H1 (cell line): ENCODE measurements at regions of chr10 and their contacts with region 1.

Region 1: GRCh38 chr10:67884313-67884841 is at the start of gene SIRT1:
- DNase-seq: peak; percentile 88 to 96
- H3K4me3 ChIP-seq: peak within 1 kb of the TSS; percentile 90 to 100 (median 94)
- H3K27ac ChIP-seq: peak within 1 kb of the TSS; percentile 77
- H3K4me1 ChIP-seq: peaks cover 0 to 6% (median 5%) of the 10 kb centered on the region in 4 experiments; a peak in 5 of 7 replicates
- H3K27me3 ChIP-seq: no peaks in the 10 kb centered on the region
- CTCF ChIP-seq: no peak
- EP300 ChIP-seq: peak in 1 of 2 experiments; percentile 37; a peak in 1 of 3 replicates
- POLR2A ChIP-seq: peak; percentile 99
- RAD21 ChIP-seq: peak in 1 of 2 experiments; percentile 19; a peak in 3 of 4 replicates
- total RNA-seq, gene SIRT1: 66.2 and 70.9 TPM in 2 replicates

Region 2: DNA sequence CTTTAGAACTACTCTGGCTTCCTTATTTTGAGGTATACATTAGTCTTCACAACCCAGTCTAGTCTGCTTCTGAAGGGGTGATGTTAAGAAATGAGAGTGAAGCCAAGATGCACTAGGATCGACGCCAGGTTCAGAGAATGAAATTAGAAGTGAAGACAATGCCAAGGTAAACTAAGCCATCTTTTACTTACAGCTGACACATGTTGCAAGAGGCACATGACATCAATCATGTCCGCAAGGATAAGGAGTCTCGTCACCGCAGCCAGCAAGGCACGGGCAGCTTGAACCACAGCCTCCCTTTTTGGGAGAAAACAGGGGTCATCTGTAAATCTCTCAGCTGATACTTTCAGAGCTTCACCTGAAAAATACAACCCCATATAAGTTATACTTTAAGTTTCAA is 345.1 kb before region 1 on chr10:
- CTCF ChIA-PET with region 1: no interaction called
- POLR2A ChIA-PET with region 1: no interaction called
- DNase-seq: no peak
- H3K4me3 ChIP-seq: no peak overlapping the region
- H3K27ac ChIP-seq: no peak overlapping the region
- H3K4me1 ChIP-seq: no peaks in the 10 kb centered on the region
- H3K27me3 ChIP-seq: no peaks in the 10 kb centered on the region
- CTCF ChIP-seq: no peak
- EP300 ChIP-seq: no peak
- POLR2A ChIP-seq: no peak
- RAD21 ChIP-seq: no peak

Region 3: DNA sequence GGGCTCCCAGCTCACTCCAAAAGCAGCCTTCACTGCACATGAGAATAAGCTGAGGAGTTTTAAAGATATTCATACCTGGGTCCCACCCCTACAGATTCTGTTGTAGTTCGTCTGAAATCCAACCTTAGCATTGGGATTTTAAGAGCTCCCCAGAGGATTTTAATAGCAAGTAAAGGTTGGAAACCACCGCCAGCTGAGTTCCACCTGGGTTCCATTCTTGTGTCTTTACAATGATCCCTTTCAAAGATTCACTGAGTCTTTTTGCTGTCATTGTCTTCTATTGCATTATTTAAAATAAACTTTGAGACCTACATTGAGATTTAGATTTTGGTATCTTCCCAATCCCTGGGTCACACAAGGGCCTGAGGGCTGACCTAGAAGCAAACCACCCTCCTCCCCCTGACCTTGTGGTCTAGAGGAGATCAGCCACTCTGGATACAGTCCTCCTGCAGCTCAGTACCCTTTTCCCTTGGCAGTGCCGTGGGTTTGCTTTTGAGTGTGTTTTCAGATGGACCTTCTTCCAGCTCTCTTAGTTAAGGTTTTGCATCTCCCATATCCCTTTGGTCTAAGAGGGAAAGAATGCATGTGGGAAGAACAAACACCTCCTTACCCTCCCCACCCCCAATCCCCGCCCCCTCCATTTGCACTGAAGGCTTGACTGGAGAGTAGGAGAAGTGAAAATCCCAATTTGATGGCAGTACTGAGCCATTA is 22.5 kb before region 1 on chr10:
- CTCF ChIA-PET with region 1: interaction called, 17 read pairs
- POLR2A ChIA-PET with region 1: interaction called, 41 read pairs
- DNase-seq: peak; percentile 59 to 67
- H3K4me3 ChIP-seq: peak overlapping the region in 3 of 4 experiments; percentile 20 to 48 (median 35); a peak in 5 of 8 replicates
- H3K27ac ChIP-seq: peak overlapping the region; percentile 36
- H3K4me1 ChIP-seq: peaks cover 2 to 11% (median 10%) of the 10 kb centered on the region in 4 experiments; a peak in 6 of 7 replicates
- H3K27me3 ChIP-seq: no peaks in the 10 kb centered on the region; a peak in 1 of 7 replicates
- CTCF ChIP-seq: no peak
- EP300 ChIP-seq: peak in 1 of 2 experiments; percentile 5; a peak in 1 of 3 replicates
- POLR2A ChIP-seq: peak; percentile 47 to 61
- RAD21 ChIP-seq: no peak

Region 4: DNA sequence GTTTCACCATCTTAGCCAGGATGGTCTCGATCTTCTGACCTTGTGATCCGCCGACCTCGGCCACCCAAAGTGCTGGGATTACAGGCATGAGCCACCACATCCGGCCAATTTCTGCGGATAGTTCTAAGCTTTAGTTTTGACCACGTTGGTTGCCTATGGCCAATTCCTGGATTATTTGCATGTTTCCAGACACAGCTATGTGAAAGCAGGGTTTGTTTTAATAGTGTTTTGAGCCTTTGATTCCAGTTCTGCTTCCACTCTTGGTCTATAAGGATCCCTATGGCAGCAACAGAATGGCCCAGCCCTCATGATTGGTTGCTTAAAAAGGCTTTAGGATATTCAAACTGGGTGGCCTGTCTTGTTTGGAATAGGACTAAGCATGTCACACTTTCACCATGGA is 19.2 kb after region 1 on chr10:
- CTCF ChIA-PET with region 1: no interaction called
- POLR2A ChIA-PET with region 1: interaction called, 26 read pairs
- DNase-seq: no peak
- H3K4me3 ChIP-seq: no peak overlapping the region
- H3K27ac ChIP-seq: no peak overlapping the region
- H3K4me1 ChIP-seq: no peaks in the 10 kb centered on the region; a peak in 1 of 7 replicates
- H3K27me3 ChIP-seq: no peaks in the 10 kb centered on the region
- CTCF ChIP-seq: no peak
- EP300 ChIP-seq: no peak
- POLR2A ChIP-seq: no peak
- RAD21 ChIP-seq: no peak